ENCODE measurements at regions of chr11 and their contacts with region 1.

Region 1: GRCh38 chr11:56122073-56122472 is at the start of gene OR8H3:
- DNase-seq: no peak
- H3K4me3 ChIP-seq: no peak within 1 kb of the TSS
- H3K27ac ChIP-seq: no peak within 1 kb of the TSS
- H3K4me1 ChIP-seq: no peaks in the 10 kb centered on the region
- H3K27me3 ChIP-seq: no peaks in the 10 kb centered on the region
- CTCF ChIP-seq: no peak
- EP300 ChIP-seq: no peak
- POLR2A ChIP-seq: no peak
- total RNA-seq, gene OR8H3: not detected

Region 2: GRCh38 chr11:56163804-56164203 is 41.7 kb after region 1 on chr11:
- in situ Hi-C with region 1: no loop called
- intact Hi-C with region 1: loop called (anchors 2 kb)
- DNase-seq: no peak
- H3K4me3 ChIP-seq: no peak overlapping the region
- H3K27ac ChIP-seq: no peak overlapping the region
- H3K4me1 ChIP-seq: no peaks in the 10 kb centered on the region
- H3K27me3 ChIP-seq: no peaks in the 10 kb centered on the region
- CTCF ChIP-seq: no peak
- EP300 ChIP-seq: no peak
- POLR2A ChIP-seq: no peak

Measured in transverse colon (tissue), 4 donors.